Caco-2 (cell line): ENCODE measurements at regions of chrX and their contacts with region 1.

Region 1: GRCh38 chrX:119655125-119655524 is 37.8 kb downstream of the SEPTIN6 start:
- DNase-seq: no peak
- H3K4me3 ChIP-seq: no peak overlapping the region
- H3K4me3 Mint-ChIP-seq: no peak overlapping the region
- H3K27ac Mint-ChIP-seq: no peak overlapping the region
- H3K4me1 ChIP-seq: 0 out of 2 replicates have a peak, but pooled peaks cover 7% of the 10 kb centered on the region
- H3K4me1 Mint-ChIP-seq: peaks cover 6% of the 10 kb centered on the region
- H3K27me3 ChIP-seq: no peaks in the 10 kb centered on the region
- H3K27me3 Mint-ChIP-seq: no peaks in the 10 kb centered on the region
- CTCF ChIP-seq: no peak

Region 2: GRCh38 chrX:119266364-119266995 is 388.6 kb before region 1 on chrX:
- CTCF ChIA-PET with region 1: no interaction called
- POLR2A ChIA-PET with region 1: no interaction called
- intact Hi-C with region 1: no loop called
- DNase-seq: peak in 1 of 2 experiments; percentile 4
- H3K4me3 ChIP-seq: no peak overlapping the region
- H3K4me3 Mint-ChIP-seq: no peak overlapping the region
- H3K27ac Mint-ChIP-seq: no peak overlapping the region
- H3K4me1 ChIP-seq: no peaks in the 10 kb centered on the region
- H3K4me1 Mint-ChIP-seq: no peaks in the 10 kb centered on the region
- H3K27me3 ChIP-seq: no peaks in the 10 kb centered on the region
- H3K27me3 Mint-ChIP-seq: peaks cover 2% of the 10 kb centered on the region
- CTCF ChIP-seq: peak; percentile 46 to 75

Region 3: GRCh38 chrX:119606280-119607015 is 48.7 kb before region 1 on chrX and contains the start of gene NKRF:
- CTCF ChIA-PET with region 1: interaction called, 3 read pairs
- POLR2A ChIA-PET with region 1: interaction called, 4 read pairs
- intact Hi-C with region 1: loop called (anchors 2 kb)
- DNase-seq: peak; percentile 90 to 91
- H3K4me3 ChIP-seq: peak within 1 kb of the TSS; percentile 95
- H3K4me3 Mint-ChIP-seq: peak within 1 kb of the TSS; percentile 94
- H3K27ac Mint-ChIP-seq: peak within 1 kb of the TSS; percentile 94
- H3K4me1 ChIP-seq: no peaks in the 10 kb centered on the region
- H3K4me1 Mint-ChIP-seq: no peaks in the 10 kb centered on the region
- H3K27me3 ChIP-seq: no peaks in the 10 kb centered on the region
- H3K27me3 Mint-ChIP-seq: no peaks in the 10 kb centered on the region
- CTCF ChIP-seq: no peak
- total RNA-seq, gene NKRF: 14.4 and 16.6 TPM in 2 replicates

Region 4: GRCh38 chrX:119617517-119618164 is 37.5 kb before region 1 on chrX:
- CTCF ChIA-PET with region 1: no interaction called
- POLR2A ChIA-PET with region 1: no interaction called
- intact Hi-C with region 1: no loop called
- DNase-seq: no peak
- H3K4me3 ChIP-seq: no peak overlapping the region
- H3K4me3 Mint-ChIP-seq: no peak overlapping the region
- H3K27ac Mint-ChIP-seq: no peak overlapping the region
- H3K4me1 ChIP-seq: no peaks in the 10 kb centered on the region
- H3K4me1 Mint-ChIP-seq: no peaks in the 10 kb centered on the region
- H3K27me3 ChIP-seq: no peaks in the 10 kb centered on the region
- H3K27me3 Mint-ChIP-seq: no peaks in the 10 kb centered on the region
- CTCF ChIP-seq: no peak

Region 5: GRCh38 chrX:119669424-119670037 is 14.4 kb after region 1 on chrX:
- CTCF ChIA-PET with region 1: no interaction called
- POLR2A ChIA-PET with region 1: no interaction called
- intact Hi-C with region 1: no loop called
- DNase-seq: no peak
- H3K4me3 ChIP-seq: no peak overlapping the region
- H3K4me3 Mint-ChIP-seq: no peak overlapping the region
- H3K27ac Mint-ChIP-seq: no peak overlapping the region
- H3K4me1 ChIP-seq: no peaks in the 10 kb centered on the region
- H3K4me1 Mint-ChIP-seq: peaks cover 7% of the 10 kb centered on the region
- H3K27me3 ChIP-seq: no peaks in the 10 kb centered on the region
- H3K27me3 Mint-ChIP-seq: no peaks in the 10 kb centered on the region
- CTCF ChIP-seq: no peak

Region 6: GRCh38 chrX:120350450-120351138 is 695.5 kb after region 1 on chrX:
- CTCF ChIA-PET with region 1: no interaction called
- POLR2A ChIA-PET with region 1: no interaction called
- intact Hi-C with region 1: no loop called
- DNase-seq: no peak
- H3K4me3 ChIP-seq: no peak overlapping the region
- H3K4me3 Mint-ChIP-seq: no peak overlapping the region
- H3K27ac Mint-ChIP-seq: no peak overlapping the region
- H3K4me1 ChIP-seq: no peaks in the 10 kb centered on the region
- H3K4me1 Mint-ChIP-seq: no peaks in the 10 kb centered on the region
- H3K27me3 ChIP-seq: no peaks in the 10 kb centered on the region
- H3K27me3 Mint-ChIP-seq: peaks cover 2% of the 10 kb centered on the region
- CTCF ChIP-seq: no peak